Posterior vena cava (tissue), 2 donors: ENCODE measurements at regions of chr18 and their contacts with region 1.

Region 1: DNA sequence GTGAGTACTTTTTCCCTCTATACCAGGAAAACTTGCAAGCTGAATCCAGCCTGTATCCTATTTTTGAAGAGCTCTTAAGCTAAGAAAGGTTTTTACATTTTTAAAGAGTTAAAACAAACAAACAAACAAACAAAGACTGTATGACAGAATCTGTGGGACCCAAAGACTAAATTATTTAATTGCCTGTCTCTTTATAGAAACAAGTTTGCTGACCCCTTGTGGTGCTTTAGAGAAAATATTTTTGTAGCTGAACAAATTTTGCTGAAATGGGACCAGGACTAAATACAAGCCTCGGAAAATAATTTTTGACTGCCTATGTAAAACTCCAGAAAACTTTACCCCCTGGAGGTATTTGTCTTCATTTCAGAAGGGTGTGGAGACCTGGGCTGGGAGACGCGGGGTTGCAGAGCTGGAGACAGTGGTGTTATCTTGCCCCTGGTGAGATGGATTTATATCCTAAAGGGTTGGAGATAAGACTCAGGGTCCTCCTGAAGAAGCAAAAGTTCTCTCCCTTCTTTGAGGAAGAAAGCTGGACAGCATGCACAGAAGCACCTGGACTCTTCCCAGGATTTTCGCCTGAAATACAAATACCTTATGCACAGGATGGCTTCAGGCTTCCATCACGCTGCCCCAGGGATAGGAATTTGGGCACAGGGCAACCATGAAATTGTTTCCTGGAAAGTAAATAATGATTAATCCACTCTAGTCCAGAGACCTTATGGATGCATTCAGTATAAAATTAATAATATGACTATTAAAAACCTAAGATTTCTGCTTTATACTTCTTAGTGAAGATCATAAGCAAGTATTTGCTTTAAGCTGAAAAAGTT is 54.3 kb downstream of the TMX3 start:
- DNase-seq: no peak

Region 2: DNA sequence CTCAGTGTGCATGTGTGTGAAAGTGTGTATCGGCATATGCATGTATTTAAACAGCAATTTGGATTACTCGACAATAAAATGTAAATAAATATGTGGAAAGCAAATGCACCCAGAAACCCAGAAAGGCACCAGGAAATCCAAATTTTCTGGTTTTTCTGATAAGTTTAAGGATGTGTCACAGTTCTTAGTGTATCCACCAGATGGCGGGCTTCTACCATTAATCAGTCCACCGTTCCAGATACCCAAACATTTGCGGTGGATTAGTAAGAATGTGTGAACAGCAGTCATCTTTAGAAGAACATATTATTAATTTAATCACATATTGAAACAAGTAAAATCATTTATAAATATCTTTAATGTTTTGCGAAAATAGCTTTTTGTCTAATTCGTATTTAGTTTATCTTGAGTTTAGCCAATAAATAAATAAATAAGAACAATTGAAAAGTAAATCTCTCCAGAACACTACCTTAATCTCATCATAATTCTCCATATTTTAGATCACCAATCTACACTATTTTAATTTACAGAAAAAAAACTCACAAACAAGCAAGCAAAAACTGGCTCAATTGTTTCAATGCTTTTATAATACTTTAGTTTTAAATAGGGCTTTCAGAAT is 1442.9 kb before region 1 on chr18:
- intact Hi-C with region 1: loop called (anchors 5 to 10 kb)
- DNase-seq: no peak

Region 3: GRCh38 chr18:68056936-68057335 is 603.6 kb before region 1 on chr18:
- intact Hi-C with region 1: no loop called
- DNase-seq: no peak

Region 4: DNA sequence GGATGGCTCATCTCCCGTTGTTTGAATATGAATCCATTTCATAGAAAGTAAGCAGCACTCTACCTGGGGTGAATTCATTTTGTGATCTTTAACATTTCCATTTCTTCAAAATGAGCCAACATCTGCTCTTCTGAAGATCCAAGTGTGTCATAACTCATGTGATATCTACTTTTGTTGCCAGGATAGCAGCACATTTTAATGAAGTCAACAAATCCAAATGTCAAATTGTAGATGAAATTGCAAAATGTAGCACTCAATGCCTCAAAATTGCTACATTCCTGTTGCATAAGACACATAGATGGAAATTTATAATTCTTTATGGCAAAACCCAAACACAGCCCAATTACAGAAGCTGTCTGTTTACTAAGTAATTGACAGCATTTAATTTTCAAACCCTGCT is 306.4 kb before region 1 on chr18:
- intact Hi-C with region 1: no loop called
- DNase-seq: no peak

Region 5: DNA sequence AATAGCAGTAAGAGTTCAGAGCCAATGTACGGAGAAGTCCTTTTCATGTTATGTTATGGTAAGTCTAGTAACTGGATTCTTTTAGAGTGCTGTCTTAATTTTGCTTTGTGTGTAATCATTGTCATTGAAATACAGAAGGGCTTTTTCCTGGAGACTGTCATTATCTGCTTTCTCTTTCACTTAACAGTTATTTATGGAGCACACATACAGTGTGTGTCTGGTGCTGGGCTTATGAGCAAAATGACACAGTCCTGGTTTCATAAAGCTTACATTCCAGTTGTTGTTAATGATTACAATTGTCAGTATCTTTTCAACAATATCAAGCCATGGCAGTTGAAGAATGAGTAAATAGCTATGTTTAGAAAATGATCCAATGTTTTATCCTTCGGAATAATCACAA is 232.8 kb after region 1 on chr18:
- intact Hi-C with region 1: no loop called
- DNase-seq: no peak